K562 (cell line): ENCODE measurements at regions of chr1 and their contacts with region 1.

Region 1: GRCh38 chr1:3618881-3619671 is 5.7 kb upstream of the TPRG1L start:
- DNase-seq: peak; percentile 85 to 88 (median 87)
- ATAC-seq: peak; percentile 87
- H3K4me3 ChIP-seq: no peak overlapping the region
- H3K27ac ChIP-seq: no peak overlapping the region
- H3K4me1 ChIP-seq: peaks cover 5 to 20% of the 10 kb centered on the region in 2 experiments; a peak in 3 of 5 replicates
- H3K27me3 ChIP-seq: peaks cover 27 to 63% of the 10 kb centered on the region in 2 experiments; a peak in 4 of 5 replicates
- CTCF ChIP-seq: peak; percentile 93 to 98 (median 98)
- EP300 ChIP-seq: no peak
- POLR2A ChIP-seq: no peak
- RAD21 ChIP-seq: peak; percentile 69 to 90

Region 2: GRCh38 chr1:3453203-3453761 is 165.8 kb before region 1 on chr1:
- CTCF ChIA-PET with region 1: interaction called, 16 read pairs
- POLR2A ChIA-PET with region 1: interaction called, 4 read pairs
- in situ Hi-C with region 1: no loop called
- intact Hi-C with region 1: loop called (anchors 1 kb)
- DNase-seq: peak; percentile 84 to 91 (median 90)
- ATAC-seq: peak; percentile 86
- H3K4me3 ChIP-seq: no peak overlapping the region
- H3K27ac ChIP-seq: no peak overlapping the region
- H3K4me1 ChIP-seq: peaks cover 0 to 39% of the 10 kb centered on the region in 2 experiments; a peak in 3 of 5 replicates
- H3K27me3 ChIP-seq: peaks cover 5 to 28% of the 10 kb centered on the region in 2 experiments; a peak in 4 of 5 replicates
- CTCF ChIP-seq: peak; percentile 96 to 98 (median 97)
- EP300 ChIP-seq: no peak
- POLR2A ChIP-seq: no peak
- RAD21 ChIP-seq: peak; percentile 80 to 96

Region 3: GRCh38 chr1:3491291-3492246 is 127.5 kb before region 1 on chr1:
- CTCF ChIA-PET with region 1: interaction called, 20 read pairs
- POLR2A ChIA-PET with region 1: interaction called, 4 read pairs
- in situ Hi-C with region 1: no loop called
- intact Hi-C with region 1: loop called (anchors 1 kb)
- DNase-seq: peak; percentile 79 to 97 (median 94)
- ATAC-seq: peak; percentile 94
- H3K4me3 ChIP-seq: no peak overlapping the region
- H3K27ac ChIP-seq: no peak overlapping the region
- H3K4me1 ChIP-seq: peaks cover 0 to 37% of the 10 kb centered on the region in 2 experiments; a peak in 2 of 5 replicates
- H3K27me3 ChIP-seq: peaks cover 4 to 33% of the 10 kb centered on the region in 2 experiments; a peak in 3 of 5 replicates
- CTCF ChIP-seq: peak; percentile 89 to 96 (median 94)
- EP300 ChIP-seq: no peak
- POLR2A ChIP-seq: no peak
- RAD21 ChIP-seq: peak in 1 of 2 experiments; percentile 79; a peak in 2 of 4 replicates

Region 4: DNA sequence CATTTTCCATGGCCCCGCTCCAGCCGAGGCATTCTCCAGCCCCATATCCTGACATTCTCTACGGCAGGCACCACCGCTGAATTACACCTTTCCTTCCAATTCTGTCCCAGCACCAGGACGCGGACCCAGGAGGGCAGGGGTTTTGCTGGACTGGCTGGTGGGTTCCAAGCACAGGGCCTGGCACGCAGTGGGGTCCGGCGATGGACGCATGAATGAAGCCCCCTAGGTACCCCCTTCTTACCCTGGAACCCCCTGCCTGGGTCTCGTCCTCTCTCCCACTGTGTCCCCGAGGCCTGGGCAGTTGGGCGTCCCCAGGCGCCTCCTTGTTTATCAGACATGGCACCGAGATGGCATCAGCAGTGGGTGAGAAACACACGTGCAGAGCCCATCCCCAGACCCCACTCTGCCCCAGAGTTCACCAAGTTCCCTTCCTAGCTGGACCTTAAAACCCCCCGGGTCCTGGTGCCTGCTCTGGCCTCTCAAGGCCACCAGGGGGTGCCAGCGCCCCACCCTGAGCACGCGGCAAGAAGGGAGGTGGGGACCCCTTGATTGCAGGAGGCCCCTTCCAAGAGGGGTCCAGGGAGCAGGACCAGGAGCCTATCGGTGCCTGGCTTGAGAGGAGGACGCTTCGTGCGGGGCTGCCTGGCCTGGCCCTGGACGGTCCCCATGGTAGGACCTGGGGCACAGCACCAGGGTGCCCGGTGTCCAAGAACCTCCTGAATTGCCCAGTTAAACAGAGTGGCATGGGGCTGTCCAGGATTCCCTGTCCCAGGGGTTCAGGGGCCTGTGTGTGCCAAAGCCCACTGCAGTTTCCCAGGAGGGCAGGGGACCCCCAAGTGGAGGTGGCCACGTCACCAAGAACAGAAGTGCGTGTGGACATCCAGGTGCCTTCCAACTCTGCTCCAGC is 53.9 kb before region 1 on chr1:
- CTCF ChIA-PET with region 1: interaction called, 12 read pairs
- POLR2A ChIA-PET with region 1: no interaction called
- in situ Hi-C with region 1: no loop called
- intact Hi-C with region 1: loop called (anchors 1 kb)
- DNase-seq: peak; percentile 57 to 89 (median 86)
- ATAC-seq: peak; percentile 80
- H3K4me3 ChIP-seq: no peak overlapping the region
- H3K27ac ChIP-seq: no peak overlapping the region
- H3K4me1 ChIP-seq: peaks cover 0 to 21% of the 10 kb centered on the region in 2 experiments; a peak in 1 of 5 replicates
- H3K27me3 ChIP-seq: peaks cover 20 to 63% of the 10 kb centered on the region in 2 experiments
- CTCF ChIP-seq: peak; percentile 89 to 94 (median 91)
- EP300 ChIP-seq: no peak
- POLR2A ChIP-seq: no peak
- RAD21 ChIP-seq: peak; percentile 84 to 94

Region 5: GRCh38 chr1:3588395-3588794 is 30.7 kb before region 1 on chr1:
- CTCF ChIA-PET with region 1: interaction called, 3 read pairs
- POLR2A ChIA-PET with region 1: no interaction called
- in situ Hi-C with region 1: no loop called
- intact Hi-C with region 1: loop called (anchors 2 kb)
- DNase-seq: no peak
- ATAC-seq: peak; percentile 73
- H3K4me3 ChIP-seq: no peak overlapping the region
- H3K27ac ChIP-seq: no peak overlapping the region
- H3K4me1 ChIP-seq: peaks cover 0 to 23% of the 10 kb centered on the region in 2 experiments; a peak in 2 of 5 replicates
- H3K27me3 ChIP-seq: peaks cover 17 to 38% of the 10 kb centered on the region in 2 experiments; a peak in 4 of 5 replicates
- CTCF ChIP-seq: peak in 1 of 3 experiments; percentile 74; a peak in 2 of 6 replicates
- EP300 ChIP-seq: no peak
- POLR2A ChIP-seq: no peak
- RAD21 ChIP-seq: no peak